Ascending aorta (tissue), 2 donors: ENCODE measurements at regions of chr15 and their contacts with region 1.

Region 1: DNA sequence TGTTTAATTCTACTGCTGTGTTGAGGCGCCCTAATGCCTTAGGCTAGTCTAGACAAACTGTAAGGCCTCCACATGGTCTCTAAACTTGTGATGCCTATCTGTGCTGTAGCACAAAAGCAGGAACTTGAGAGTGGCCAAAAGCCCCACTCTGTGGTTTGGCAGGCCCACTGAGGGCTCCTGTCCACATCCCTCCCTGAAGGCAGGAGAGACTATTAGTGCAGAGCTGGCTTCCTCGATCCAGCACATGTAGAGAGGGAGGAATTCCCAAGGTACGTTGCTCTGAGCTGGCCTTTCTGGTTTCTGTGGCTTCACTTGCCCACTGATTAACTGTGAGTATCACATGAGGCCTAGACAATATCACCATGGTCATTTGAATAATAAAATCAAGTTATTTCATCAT is 90.6 kb downstream of the POLR2M start:
- DNase-seq: no peak
- H3K4me3 ChIP-seq: no peak overlapping the region
- H3K27ac ChIP-seq: no peak overlapping the region
- H3K4me1 ChIP-seq: peaks cover 0 to 2% of the 10 kb centered on the region in 2 donors
- H3K27me3 ChIP-seq: no peaks in the 10 kb centered on the region
- CTCF ChIP-seq: no peak

Region 2: DNA sequence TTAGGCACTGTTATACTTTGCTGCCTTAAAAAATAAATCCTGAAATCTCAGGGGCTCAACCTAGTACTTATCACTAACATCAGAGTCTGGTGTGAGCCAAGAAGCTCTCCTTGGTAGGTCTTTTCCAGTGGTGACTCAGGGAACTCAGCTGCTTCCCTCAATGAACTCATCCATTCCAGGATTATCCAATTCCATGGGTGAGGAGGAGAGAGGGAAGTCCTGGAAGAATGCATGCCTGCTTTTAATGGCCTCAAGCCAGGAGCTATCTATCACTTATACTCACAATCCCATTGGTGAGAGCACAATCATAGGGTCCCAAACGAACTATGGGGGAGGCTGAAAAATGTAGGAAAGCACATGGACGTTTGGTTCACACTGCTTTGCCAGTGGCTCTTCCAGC is 23.0 kb after region 1 on chr15:
- intact Hi-C with region 1: loop called (anchors 1 kb)
- DNase-seq: no peak
- H3K4me3 ChIP-seq: no peak overlapping the region
- H3K27ac ChIP-seq: no peak overlapping the region
- H3K4me1 ChIP-seq: no peaks in the 10 kb centered on the region
- H3K27me3 ChIP-seq: no peaks in the 10 kb centered on the region
- CTCF ChIP-seq: no peak